ENCODE measurements at regions of chr20 and their contacts with region 1.

Region 1: GRCh38 chr20:8722276-8722928 is 346.5 kb upstream of the PLCB4 start:
- DNase-seq: peak; percentile 26 to 41 (median 34)
- H3K4me3 ChIP-seq: no peak overlapping the region
- H3K4me3 Mint-ChIP-seq: no peak overlapping the region
- H3K27ac ChIP-seq: no peak overlapping the region
- H3K27ac Mint-ChIP-seq: no peak overlapping the region
- H3K4me1 ChIP-seq: no peaks in the 10 kb centered on the region
- H3K4me1 Mint-ChIP-seq: no peaks in the 10 kb centered on the region
- H3K27me3 ChIP-seq: no peaks in the 10 kb centered on the region
- H3K27me3 Mint-ChIP-seq: no peaks in the 10 kb centered on the region

Region 2: GRCh38 chr20:7935027-7935551 is 787.3 kb before region 1 on chr20:
- CTCF ChIA-PET with region 1: interaction called, 98 read pairs
- POLR2A ChIA-PET with region 1: interaction called, 4 read pairs
- intact Hi-C with region 1: no loop called
- DNase-seq: no peak
- H3K4me3 ChIP-seq: no peak overlapping the region
- H3K4me3 Mint-ChIP-seq: no peak overlapping the region
- H3K27ac ChIP-seq: no peak overlapping the region
- H3K27ac Mint-ChIP-seq: no peak overlapping the region
- H3K4me1 ChIP-seq: no peaks in the 10 kb centered on the region
- H3K4me1 Mint-ChIP-seq: peaks cover 0 to 5% (median 0%) of the 10 kb centered on the region in 4 donors
- H3K27me3 ChIP-seq: no peaks in the 10 kb centered on the region
- H3K27me3 Mint-ChIP-seq: peaks cover 5 to 21% of the 10 kb centered on the region in 2 donors

Region 3: GRCh38 chr20:8036771-8037170 is 685.6 kb before region 1 on chr20:
- CTCF ChIA-PET with region 1: interaction called, 14 read pairs
- POLR2A ChIA-PET with region 1: no interaction called
- intact Hi-C with region 1: no loop called
- DNase-seq: no peak
- H3K4me3 ChIP-seq: no peak overlapping the region
- H3K4me3 Mint-ChIP-seq: no peak overlapping the region
- H3K27ac ChIP-seq: no peak overlapping the region
- H3K27ac Mint-ChIP-seq: no peak overlapping the region
- H3K4me1 ChIP-seq: no peaks in the 10 kb centered on the region
- H3K4me1 Mint-ChIP-seq: no peaks in the 10 kb centered on the region
- H3K27me3 ChIP-seq: no peaks in the 10 kb centered on the region
- H3K27me3 Mint-ChIP-seq: peaks cover 4 to 6% of the 10 kb centered on the region in 2 donors

Region 4: GRCh38 chr20:8131598-8132483 is 590.6 kb before region 1 on chr20 and contains the start of gene PLCB1:
- CTCF ChIA-PET with region 1: interaction called, 22 read pairs
- POLR2A ChIA-PET with region 1: no interaction called
- intact Hi-C with region 1: loop called (anchors 2 kb)
- DNase-seq: peak; percentile 79 to 84 (median 80)
- H3K4me3 ChIP-seq: peak within 1 kb of the TSS in 1 of 2 donors; percentile 27
- H3K4me3 Mint-ChIP-seq: peak within 1 kb of the TSS; percentile 84 to 92 (median 88)
- H3K27ac ChIP-seq: no peak within 1 kb of the TSS
- H3K27ac Mint-ChIP-seq: peak within 1 kb of the TSS in 6 of 7 donors; percentile 62 to 77 (median 65)
- H3K4me1 ChIP-seq: peaks cover 19% of the 10 kb centered on the region
- H3K4me1 Mint-ChIP-seq: peaks cover 13 to 34% (median 25%) of the 10 kb centered on the region in 4 donors
- H3K27me3 ChIP-seq: no peaks in the 10 kb centered on the region
- H3K27me3 Mint-ChIP-seq: peaks cover 7 to 17% of the 10 kb centered on the region in 2 donors
- total RNA-seq, gene PLCB1: 9.5 to 9.6 TPM

Region 5: GRCh38 chr20:8709627-8710026 is 12.8 kb before region 1 on chr20:
- CTCF ChIA-PET with region 1: interaction called, 27 read pairs
- POLR2A ChIA-PET with region 1: no interaction called
- intact Hi-C with region 1: no loop called
- DNase-seq: no peak
- H3K4me3 ChIP-seq: no peak overlapping the region
- H3K4me3 Mint-ChIP-seq: no peak overlapping the region
- H3K27ac ChIP-seq: no peak overlapping the region
- H3K27ac Mint-ChIP-seq: no peak overlapping the region
- H3K4me1 ChIP-seq: no peaks in the 10 kb centered on the region
- H3K4me1 Mint-ChIP-seq: no peaks in the 10 kb centered on the region
- H3K27me3 ChIP-seq: no peaks in the 10 kb centered on the region
- H3K27me3 Mint-ChIP-seq: no peaks in the 10 kb centered on the region